ENCODE measurements at regions of chr3 and their contacts with region 1.

Region 1: GRCh38 chr3:187150599-187150998 is 11.3 kb upstream of the RPL39L start:
- DNase-seq: peak; percentile 81
- H3K4me3 Mint-ChIP-seq: no peak overlapping the region
- H3K27ac Mint-ChIP-seq: no peak overlapping the region
- H3K4me1 Mint-ChIP-seq: no peaks in the 10 kb centered on the region
- H3K27me3 Mint-ChIP-seq: peaks cover 6% of the 10 kb centered on the region

Region 2: GRCh38 chr3:187107989-187108388 is 42.6 kb before region 1 on chr3:
- CTCF ChIA-PET with region 1: interaction called, 174 read pairs
- POLR2A ChIA-PET with region 1: no interaction called
- intact Hi-C with region 1: loop called (anchors 1 kb)
- DNase-seq: no peak
- H3K4me3 Mint-ChIP-seq: no peak overlapping the region
- H3K27ac Mint-ChIP-seq: no peak overlapping the region
- H3K4me1 Mint-ChIP-seq: peaks cover 3% of the 10 kb centered on the region
- H3K27me3 Mint-ChIP-seq: no peaks in the 10 kb centered on the region

Region 3: GRCh38 chr3:187125319-187126031 is 25.1 kb before region 1 on chr3:
- CTCF ChIA-PET with region 1: interaction called, 17 read pairs
- POLR2A ChIA-PET with region 1: no interaction called
- intact Hi-C with region 1: no loop called
- DNase-seq: no peak
- H3K4me3 Mint-ChIP-seq: no peak overlapping the region
- H3K27ac Mint-ChIP-seq: no peak overlapping the region
- H3K4me1 Mint-ChIP-seq: peaks cover 17% of the 10 kb centered on the region
- H3K27me3 Mint-ChIP-seq: no peaks in the 10 kb centered on the region

Region 4: GRCh38 chr3:187139126-187139894 is 11.3 kb before region 1 on chr3 and contains the start of gene RPL39L:
- CTCF ChIA-PET with region 1: interaction called, 86 read pairs
- POLR2A ChIA-PET with region 1: interaction called, 4 read pairs
- intact Hi-C with region 1: no loop called
- DNase-seq: peak; percentile 96
- H3K4me3 Mint-ChIP-seq: peak within 1 kb of the TSS; percentile 91
- H3K27ac Mint-ChIP-seq: peak within 1 kb of the TSS; percentile 93
- H3K4me1 Mint-ChIP-seq: peaks cover 22% of the 10 kb centered on the region
- H3K27me3 Mint-ChIP-seq: no peaks in the 10 kb centered on the region
- total RNA-seq, gene RPL39L: 22.5 to 25.2 TPM

Measured in activated CD4-positive, alpha-beta memory T cell treated with anti-CD3 and anti-CD28 coated beads for 36 hours (primary cell).